ENCODE measurements at regions of chr3 and their contacts with region 1.

Region 1: GRCh38 chr3:183122257-183122932 is 23.1 kb upstream of the MCCC1 start:
- DNase-seq: no peak
- H3K4me3 ChIP-seq: no peak overlapping the region
- H3K27ac ChIP-seq: no peak overlapping the region
- H3K4me1 ChIP-seq: peaks cover 0 to 3% of the 10 kb centered on the region in 2 donors
- H3K27me3 ChIP-seq: no peaks in the 10 kb centered on the region
- CTCF ChIP-seq: peak; percentile 63 to 86 (median 75)
- POLR2A ChIP-seq: no peak

Region 2: DNA sequence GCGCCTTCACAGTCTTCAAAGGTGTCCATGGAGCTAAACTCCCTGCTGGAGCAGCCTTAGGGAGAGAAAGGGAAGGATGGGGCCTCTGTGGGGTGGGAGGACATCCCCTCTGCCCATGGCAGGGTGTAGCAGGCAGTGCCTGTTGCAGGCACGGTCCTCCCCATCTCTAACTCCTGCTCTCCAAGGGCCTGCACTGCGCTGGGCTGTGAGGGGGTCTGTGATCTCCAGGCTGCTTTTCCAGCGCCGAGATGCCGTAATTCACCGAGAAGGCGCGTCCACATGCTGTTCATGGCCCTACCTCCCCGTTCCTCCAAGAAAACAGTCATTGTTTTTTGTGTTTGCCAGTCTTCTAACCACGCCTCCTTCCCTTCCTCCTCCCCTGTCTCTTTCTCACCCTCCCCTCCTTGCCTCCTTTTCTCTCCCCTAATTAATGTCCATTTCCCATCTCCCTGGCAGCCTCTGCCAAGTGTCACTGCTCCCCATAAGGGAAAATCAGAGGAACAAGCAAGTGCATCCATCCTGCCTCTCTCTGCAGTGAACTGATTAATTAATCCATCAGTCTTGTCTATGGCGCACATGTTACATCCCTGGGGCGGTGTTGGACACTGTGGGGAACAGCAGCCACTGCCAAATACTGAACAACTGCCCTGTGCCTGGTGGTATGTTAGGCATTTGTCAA is 57.8 kb after region 1 on chr3:
- intact Hi-C with region 1: loop called (anchors 5 kb)
- DNase-seq: no peak
- H3K4me3 ChIP-seq: no peak overlapping the region
- H3K27ac ChIP-seq: no peak overlapping the region
- H3K4me1 ChIP-seq: peaks cover 8 to 12% of the 10 kb centered on the region in 2 donors
- H3K27me3 ChIP-seq: no peaks in the 10 kb centered on the region
- CTCF ChIP-seq: no peak
- POLR2A ChIP-seq: no peak

Region 3: GRCh38 chr3:183388213-183388895 is 266.0 kb after region 1 on chr3:
- intact Hi-C with region 1: loop called (anchors 2 kb)
- DNase-seq: no peak
- H3K4me3 ChIP-seq: no peak overlapping the region
- H3K27ac ChIP-seq: no peak overlapping the region
- H3K4me1 ChIP-seq: no peaks in the 10 kb centered on the region
- H3K27me3 ChIP-seq: no peaks in the 10 kb centered on the region
- CTCF ChIP-seq: no peak
- POLR2A ChIP-seq: no peak

Measured in thyroid gland (tissue), 4 donors.